Naive thymus-derived CD4-positive, alpha-beta T cell (primary cell): ENCODE measurements at regions of chr12 and their contacts with region 1.

Region 1: DNA sequence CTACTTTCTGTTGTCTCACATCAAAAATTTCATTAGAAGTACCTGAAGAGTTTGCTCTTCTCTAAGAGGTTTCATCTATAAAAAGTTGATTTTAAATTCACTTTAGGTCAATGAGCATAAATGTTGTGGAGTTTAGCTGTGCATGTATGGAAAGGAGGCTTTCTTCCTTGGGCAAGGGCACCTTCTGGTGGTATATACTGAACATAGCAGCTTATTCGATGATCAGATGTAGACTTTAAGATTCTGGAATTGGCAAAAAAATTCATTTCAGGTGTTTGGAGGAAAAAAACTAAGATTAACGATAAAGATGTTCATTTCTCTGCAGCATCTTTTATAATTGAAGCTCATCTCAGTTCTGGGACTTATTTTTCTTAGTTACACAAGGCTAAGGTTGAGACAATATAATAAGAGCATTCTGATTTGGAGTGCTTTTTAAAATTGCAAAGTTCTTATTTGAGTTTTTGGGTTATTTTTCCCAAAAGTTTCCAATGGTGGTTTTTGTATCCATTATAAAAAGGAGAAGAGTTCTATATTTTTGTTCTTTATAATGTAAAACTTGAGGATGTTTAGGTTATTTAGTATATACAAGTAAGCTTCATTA is 46.8 kb downstream of the TMEM117 start:
- DNase-seq: peak in 7 of 9 donors; percentile 38 to 65 (median 56)
- ATAC-seq: peak; percentile 85
- H3K4me3 ChIP-seq: no peak overlapping the region
- H3K4me3 Mint-ChIP-seq: no peak overlapping the region
- H3K27ac ChIP-seq: no peak overlapping the region
- H3K27ac Mint-ChIP-seq: no peak overlapping the region
- H3K4me1 ChIP-seq: no peaks in the 10 kb centered on the region
- H3K4me1 Mint-ChIP-seq: peaks cover 0 to 3% (median 0%) of the 10 kb centered on the region in 7 donors
- H3K27me3 ChIP-seq: no peaks in the 10 kb centered on the region
- H3K27me3 Mint-ChIP-seq: no peaks in the 10 kb centered on the region

Region 2: DNA sequence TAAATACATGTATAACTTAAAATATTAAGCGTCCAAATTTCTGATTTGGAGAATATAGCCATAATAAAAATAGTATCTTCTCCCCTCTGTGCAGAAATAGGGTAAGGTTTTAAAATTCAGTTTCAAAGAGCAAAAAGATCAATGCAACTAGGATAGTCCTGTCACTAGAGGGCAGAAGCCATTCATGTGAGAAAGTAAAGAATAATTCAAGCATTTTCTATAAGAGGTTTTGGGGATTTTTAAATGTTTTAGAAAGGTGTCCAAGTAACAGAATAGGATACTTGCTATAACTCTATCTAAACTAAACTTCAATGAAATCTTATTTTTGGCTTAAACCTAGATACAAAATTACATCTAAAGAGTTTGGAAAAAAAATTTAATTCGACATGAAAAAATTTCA is 381.0 kb before region 1 on chr12:
- CTCF ChIA-PET with region 1: no interaction called
- POLR2A ChIA-PET with region 1: no interaction called
- intact Hi-C with region 1: loop called in 1 of 2 experiments (anchors 2 kb)
- DNase-seq: no peak
- ATAC-seq: no peak
- H3K4me3 ChIP-seq: no peak overlapping the region
- H3K4me3 Mint-ChIP-seq: no peak overlapping the region
- H3K27ac ChIP-seq: no peak overlapping the region
- H3K27ac Mint-ChIP-seq: no peak overlapping the region
- H3K4me1 ChIP-seq: no peaks in the 10 kb centered on the region
- H3K4me1 Mint-ChIP-seq: no peaks in the 10 kb centered on the region
- H3K27me3 ChIP-seq: no peaks in the 10 kb centered on the region
- H3K27me3 Mint-ChIP-seq: peaks cover 0 to 4% (median 0%) of the 10 kb centered on the region in 5 donors

Region 3: DNA sequence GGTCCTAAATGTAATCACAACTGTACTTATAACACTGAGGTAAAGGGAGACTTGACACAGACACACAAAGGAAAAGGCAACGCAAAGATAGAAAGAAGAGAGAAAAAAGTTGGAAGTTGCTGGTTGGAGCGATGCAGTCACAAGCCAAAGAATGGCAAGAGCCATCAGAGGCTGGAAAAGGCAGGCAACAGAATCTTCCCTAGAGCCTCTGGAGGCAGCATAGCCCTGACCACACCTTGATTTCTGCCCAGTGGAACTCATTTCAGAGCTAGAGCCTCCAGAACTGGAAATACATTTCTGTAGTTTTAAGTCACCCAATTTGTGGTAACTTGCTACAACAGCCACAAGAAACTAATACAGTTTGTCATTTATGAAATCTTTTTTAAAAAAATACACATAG is 213.3 kb before region 1 on chr12:
- CTCF ChIA-PET with region 1: no interaction called
- POLR2A ChIA-PET with region 1: no interaction called
- intact Hi-C with region 1: loop called in 1 of 2 experiments (anchors 10 kb)
- DNase-seq: no peak
- ATAC-seq: no peak
- H3K4me3 ChIP-seq: no peak overlapping the region
- H3K4me3 Mint-ChIP-seq: no peak overlapping the region
- H3K27ac ChIP-seq: no peak overlapping the region
- H3K27ac Mint-ChIP-seq: no peak overlapping the region
- H3K4me1 ChIP-seq: no peaks in the 10 kb centered on the region
- H3K4me1 Mint-ChIP-seq: no peaks in the 10 kb centered on the region
- H3K27me3 ChIP-seq: no peaks in the 10 kb centered on the region
- H3K27me3 Mint-ChIP-seq: peaks cover 2 to 22% (median 11%) of the 10 kb centered on the region in 5 donors

Region 4: DNA sequence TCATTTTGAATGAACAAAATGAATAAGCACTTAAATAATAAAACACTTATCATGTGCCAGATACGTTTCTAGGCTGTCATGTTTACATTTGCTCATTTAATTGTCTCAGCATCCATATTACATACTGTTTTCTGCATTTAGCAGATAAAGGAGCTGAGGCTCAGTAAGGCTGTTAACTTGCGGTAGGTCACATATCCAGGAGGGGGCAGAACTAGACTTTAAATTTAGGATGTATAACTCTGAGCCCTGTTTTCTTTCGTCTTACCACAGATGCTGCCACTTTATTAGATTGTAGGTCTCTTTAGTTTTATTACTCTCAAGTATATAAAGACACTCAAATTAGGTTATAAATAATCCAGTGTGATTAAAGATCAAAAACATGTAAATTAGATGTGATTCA is 106.2 kb before region 1 on chr12:
- CTCF ChIA-PET with region 1: interaction called, 39 read pairs
- POLR2A ChIA-PET with region 1: no interaction called
- intact Hi-C with region 1: loop called (anchors 1 kb)
- DNase-seq: peak in 7 of 9 donors; percentile 19 to 55 (median 38)
- ATAC-seq: peak; percentile 66
- H3K4me3 ChIP-seq: no peak overlapping the region
- H3K4me3 Mint-ChIP-seq: no peak overlapping the region
- H3K27ac ChIP-seq: no peak overlapping the region
- H3K27ac Mint-ChIP-seq: no peak overlapping the region
- H3K4me1 ChIP-seq: no peaks in the 10 kb centered on the region
- H3K4me1 Mint-ChIP-seq: peaks cover 0 to 12% (median 6%) of the 10 kb centered on the region in 7 donors
- H3K27me3 ChIP-seq: no peaks in the 10 kb centered on the region
- H3K27me3 Mint-ChIP-seq: no peaks in the 10 kb centered on the region

Region 5: GRCh38 chr12:43835656-43836474 is 46.8 kb before region 1 on chr12 and contains the start of gene TMEM117:
- CTCF ChIA-PET with region 1: interaction called, 3 read pairs
- POLR2A ChIA-PET with region 1: no interaction called
- intact Hi-C with region 1: loop called in 1 of 2 experiments (anchors 2 kb)
- DNase-seq: peak; percentile 40 to 73 (median 67)
- ATAC-seq: peak; percentile 83
- H3K4me3 ChIP-seq: peak within 1 kb of the TSS; percentile 73
- H3K4me3 Mint-ChIP-seq: peak within 1 kb of the TSS; percentile 83 to 95 (median 90)
- H3K27ac ChIP-seq: peak within 1 kb of the TSS; percentile 81
- H3K27ac Mint-ChIP-seq: peak within 1 kb of the TSS; percentile 47 to 94 (median 89)
- H3K4me1 ChIP-seq: peaks cover 21 to 27% of the 10 kb centered on the region in 2 donors
- H3K4me1 Mint-ChIP-seq: peaks cover 25 to 75% (median 56%) of the 10 kb centered on the region in 7 donors
- H3K27me3 ChIP-seq: no peaks in the 10 kb centered on the region
- H3K27me3 Mint-ChIP-seq: peaks cover 0 to 45% (median 0%) of the 10 kb centered on the region in 5 donors
- total RNA-seq, gene TMEM117: 0.31 to 6.6 (median 4.2) TPM

Region 6: DNA sequence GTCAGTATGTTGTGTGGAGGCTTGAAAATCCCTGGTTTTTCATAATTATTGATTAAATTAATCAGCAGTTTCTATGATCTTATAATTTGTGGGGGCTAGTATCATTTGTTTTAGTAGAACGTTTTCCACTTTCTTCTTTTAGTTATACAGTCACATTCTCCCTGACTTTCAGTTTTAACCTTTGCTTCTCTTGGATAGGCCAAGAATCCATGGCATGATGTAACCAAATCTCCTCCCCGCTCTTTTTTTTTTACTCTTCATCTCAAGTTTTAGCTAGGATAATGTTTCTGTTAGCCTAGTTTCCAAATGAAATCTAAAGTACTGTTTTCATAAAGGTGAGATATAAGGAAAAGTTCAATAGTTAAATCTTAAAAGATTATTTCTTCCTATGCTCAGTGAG is 59.7 kb after region 1 on chr12:
- CTCF ChIA-PET with region 1: no interaction called
- POLR2A ChIA-PET with region 1: no interaction called
- intact Hi-C with region 1: no loop called
- DNase-seq: no peak
- ATAC-seq: no peak
- H3K4me3 ChIP-seq: no peak overlapping the region
- H3K4me3 Mint-ChIP-seq: no peak overlapping the region
- H3K27ac ChIP-seq: no peak overlapping the region
- H3K27ac Mint-ChIP-seq: no peak overlapping the region
- H3K4me1 ChIP-seq: no peaks in the 10 kb centered on the region
- H3K4me1 Mint-ChIP-seq: peaks cover 0 to 2% (median 0%) of the 10 kb centered on the region in 7 donors
- H3K27me3 ChIP-seq: no peaks in the 10 kb centered on the region
- H3K27me3 Mint-ChIP-seq: no peaks in the 10 kb centered on the region